ENCODE measurements at regions of chr19 and their contacts with region 1.

Region 1: GRCh38 chr19:55117636-55118391 is at the start of gene PPP1R12C:
- DNase-seq: peak; percentile 94 to 97 (median 96)
- H3K4me3 ChIP-seq: peak within 1 kb of the TSS; percentile 96 to 97
- H3K4me3 Mint-ChIP-seq: peak within 1 kb of the TSS; percentile 98 to 100 (median 99)
- H3K27ac ChIP-seq: peak within 1 kb of the TSS; percentile 73
- H3K27ac Mint-ChIP-seq: peak within 1 kb of the TSS; percentile 96 to 99 (median 98)
- H3K4me1 ChIP-seq: peaks cover 31% of the 10 kb centered on the region
- H3K4me1 Mint-ChIP-seq: peaks cover 15 to 53% (median 34%) of the 10 kb centered on the region in 4 donors
- H3K27me3 ChIP-seq: no peaks in the 10 kb centered on the region
- H3K27me3 Mint-ChIP-seq: peaks cover 3 to 6% of the 10 kb centered on the region in 2 donors
- total RNA-seq, gene PPP1R12C: 165 TPM

Region 2: DNA sequence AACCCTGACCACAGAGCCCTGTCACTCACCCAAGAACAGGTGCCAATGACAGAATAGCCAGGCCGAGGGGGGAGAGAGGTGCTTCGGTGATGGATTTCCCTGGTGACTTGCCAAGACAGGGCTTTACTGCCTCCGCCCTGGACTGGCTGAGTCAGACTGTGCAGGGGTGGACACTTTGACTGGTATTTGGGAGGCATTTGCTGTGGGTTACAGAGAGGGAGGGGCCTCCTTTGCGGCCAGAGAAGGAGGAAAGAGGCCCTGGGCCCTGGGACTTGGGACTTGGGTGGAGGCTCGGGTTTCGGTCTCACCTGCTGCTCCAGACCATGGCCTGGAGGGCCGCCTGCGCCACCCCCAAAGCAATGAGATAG is 46.7 kb before region 1 on chr19:
- CTCF ChIA-PET with region 1: no interaction called
- POLR2A ChIA-PET with region 1: no interaction called
- intact Hi-C with region 1: no loop called
- DNase-seq: no peak
- H3K4me3 ChIP-seq: no peak overlapping the region
- H3K4me3 Mint-ChIP-seq: no peak overlapping the region
- H3K27ac ChIP-seq: no peak overlapping the region
- H3K27ac Mint-ChIP-seq: no peak overlapping the region
- H3K4me1 ChIP-seq: peaks cover 18% of the 10 kb centered on the region
- H3K4me1 Mint-ChIP-seq: peaks cover 8 to 14% (median 9%) of the 10 kb centered on the region in 4 donors
- H3K27me3 ChIP-seq: peaks cover 11% of the 10 kb centered on the region
- H3K27me3 Mint-ChIP-seq: peaks cover 42 to 60% of the 10 kb centered on the region in 2 donors

Region 3: GRCh38 chr19:55080968-55081772 is 36.6 kb before region 1 on chr19:
- CTCF ChIA-PET with region 1: no interaction called
- POLR2A ChIA-PET with region 1: interaction called, 13 read pairs
- intact Hi-C with region 1: loop called (anchors 2 kb)
- DNase-seq: peak; percentile 84 to 90 (median 86)
- H3K4me3 ChIP-seq: peak overlapping the region; percentile 77 to 86
- H3K4me3 Mint-ChIP-seq: peak overlapping the region; percentile 81 to 91 (median 84)
- H3K27ac ChIP-seq: peak overlapping the region; percentile 9
- H3K27ac Mint-ChIP-seq: peak overlapping the region; percentile 48 to 78 (median 68)
- H3K4me1 ChIP-seq: peaks cover 23% of the 10 kb centered on the region
- H3K4me1 Mint-ChIP-seq: peaks cover 12 to 39% (median 24%) of the 10 kb centered on the region in 4 donors
- H3K27me3 ChIP-seq: no peaks in the 10 kb centered on the region
- H3K27me3 Mint-ChIP-seq: peaks cover 25 to 53% of the 10 kb centered on the region in 2 donors

Region 4: GRCh38 chr19:55160128-55160985 is 42.5 kb after region 1 on chr19:
- CTCF ChIA-PET with region 1: no interaction called
- POLR2A ChIA-PET with region 1: no interaction called
- intact Hi-C with region 1: loop called (anchors 2 kb)
- DNase-seq: peak; percentile 82 to 87 (median 85)
- H3K4me3 ChIP-seq: no peak overlapping the region
- H3K4me3 Mint-ChIP-seq: peak overlapping the region in 1 of 8 donors; percentile 26
- H3K27ac ChIP-seq: no peak overlapping the region
- H3K27ac Mint-ChIP-seq: peak overlapping the region in 5 of 7 donors; percentile 36 to 75 (median 46)
- H3K4me1 ChIP-seq: peaks cover 9% of the 10 kb centered on the region
- H3K4me1 Mint-ChIP-seq: peaks cover 3 to 10% (median 7%) of the 10 kb centered on the region in 4 donors
- H3K27me3 ChIP-seq: peaks cover 6% of the 10 kb centered on the region
- H3K27me3 Mint-ChIP-seq: peaks cover 24 to 36% of the 10 kb centered on the region in 2 donors

Region 5: GRCh38 chr19:55189424-55189823 is 71.6 kb after region 1 on chr19:
- CTCF ChIA-PET with region 1: no interaction called
- POLR2A ChIA-PET with region 1: no interaction called
- intact Hi-C with region 1: no loop called
- DNase-seq: no peak
- H3K4me3 ChIP-seq: no peak overlapping the region
- H3K4me3 Mint-ChIP-seq: no peak overlapping the region
- H3K27ac ChIP-seq: no peak overlapping the region
- H3K27ac Mint-ChIP-seq: peak overlapping the region in 3 of 7 donors; percentile 19 to 70 (median 30)
- H3K4me1 ChIP-seq: no peaks in the 10 kb centered on the region
- H3K4me1 Mint-ChIP-seq: peaks cover 0 to 9% (median 5%) of the 10 kb centered on the region in 4 donors
- H3K27me3 ChIP-seq: no peaks in the 10 kb centered on the region
- H3K27me3 Mint-ChIP-seq: peaks cover 9 to 17% of the 10 kb centered on the region in 2 donors

Region 6: DNA sequence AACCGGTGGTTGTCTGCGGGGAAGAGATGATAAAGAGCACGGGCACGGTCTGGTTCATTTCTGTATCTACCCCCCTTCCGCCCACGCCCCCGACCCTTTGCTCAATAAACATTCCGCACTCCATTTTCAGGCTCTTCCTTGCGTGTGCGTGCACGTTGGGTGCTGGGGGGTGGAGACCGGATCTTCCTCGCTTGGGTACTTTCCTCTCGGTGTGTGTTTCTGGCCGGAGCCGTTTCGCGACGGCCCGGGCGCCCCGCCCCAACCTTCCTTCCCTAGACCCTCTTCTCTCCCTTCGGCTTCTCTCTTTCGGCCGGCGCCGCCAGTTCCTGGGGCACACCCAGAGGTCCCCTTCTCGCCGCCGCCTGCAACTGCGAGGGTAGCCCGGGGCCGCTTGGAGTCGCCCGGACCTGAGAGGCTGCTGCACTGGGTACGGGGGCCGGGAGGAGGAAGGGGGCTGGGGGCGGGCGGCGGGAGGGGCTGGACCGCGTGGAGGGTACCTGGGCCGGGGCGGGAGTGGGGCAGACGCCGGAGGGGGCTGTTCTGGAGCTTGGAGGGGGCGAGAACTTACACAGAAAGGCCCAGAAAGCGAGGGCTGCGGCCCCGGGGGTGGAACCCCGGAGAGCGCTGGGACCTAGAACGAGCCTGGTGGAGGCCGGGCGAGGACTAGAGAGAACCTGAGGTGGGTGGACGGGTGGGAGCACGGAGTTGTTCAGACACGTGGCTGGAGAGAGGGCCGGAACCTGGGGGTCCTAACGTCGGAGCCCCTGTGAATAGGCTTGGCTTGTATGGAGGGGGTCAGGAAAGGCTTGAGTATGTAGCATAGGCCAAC is 525.7 kb after region 1 on chr19 and contains the start of gene ZNF581:
- CTCF ChIA-PET with region 1: no interaction called
- POLR2A ChIA-PET with region 1: no interaction called
- intact Hi-C with region 1: loop called (anchors 5 kb)
- DNase-seq: peak; percentile 77 to 85 (median 79)
- H3K4me3 ChIP-seq: peak within 1 kb of the TSS; percentile 53 to 83
- H3K4me3 Mint-ChIP-seq: peak within 1 kb of the TSS; percentile 86 to 96 (median 92)
- H3K27ac ChIP-seq: peak within 1 kb of the TSS; percentile 69
- H3K27ac Mint-ChIP-seq: peak within 1 kb of the TSS; percentile 87 to 99 (median 94)
- H3K4me1 ChIP-seq: peaks cover 49% of the 10 kb centered on the region
- H3K4me1 Mint-ChIP-seq: peaks cover 29 to 62% (median 45%) of the 10 kb centered on the region in 4 donors
- H3K27me3 ChIP-seq: no peaks in the 10 kb centered on the region
- H3K27me3 Mint-ChIP-seq: no peaks in the 10 kb centered on the region
- total RNA-seq, gene ZNF581: 21.2 to 23.4 TPM